ENCODE measurements at regions of chr9 and their contacts with region 1.

Region 1: DNA sequence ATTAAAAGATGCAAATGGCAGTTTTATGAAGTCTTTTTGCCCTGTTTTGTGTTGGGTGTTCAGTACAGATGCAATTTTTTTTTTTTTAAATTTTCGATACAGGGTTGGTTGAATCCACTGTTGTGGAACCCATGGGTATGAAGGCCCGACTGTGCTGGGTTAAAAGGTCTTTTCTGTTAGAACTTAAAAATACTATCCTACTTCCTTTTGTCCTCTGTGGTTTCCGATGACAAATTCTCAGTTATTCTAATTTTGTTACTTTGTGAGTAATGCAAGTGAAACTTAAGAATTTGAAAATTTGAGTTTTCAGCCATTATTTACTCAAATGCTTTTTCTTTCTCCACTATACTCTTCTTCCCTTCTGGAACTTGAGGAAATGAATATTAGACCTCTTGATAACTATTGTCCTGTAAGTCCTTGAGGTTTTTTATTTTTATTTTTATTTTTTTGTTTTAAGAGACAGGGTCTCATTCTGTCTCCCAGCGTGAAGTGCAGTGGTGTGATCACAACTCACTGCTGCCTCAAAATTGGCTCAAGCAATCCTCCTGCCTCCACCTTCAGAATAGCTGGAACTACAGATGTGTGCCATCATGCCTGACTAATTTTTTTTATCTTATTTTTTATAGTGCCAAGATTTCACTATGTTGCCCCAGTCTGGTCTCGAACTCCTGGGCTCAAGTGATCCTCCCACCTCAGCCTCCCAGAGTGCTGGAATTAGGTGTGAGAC is 67.5 kb downstream of the ZCCHC7 start:
- DNase-seq: no peak
- H3K4me3 Mint-ChIP-seq: peak overlapping the region; percentile 79
- H3K27ac Mint-ChIP-seq: peak overlapping the region; percentile 90
- H3K4me1 Mint-ChIP-seq: peaks cover 24% of the 10 kb centered on the region
- H3K27me3 Mint-ChIP-seq: no peaks in the 10 kb centered on the region

Region 2: DNA sequence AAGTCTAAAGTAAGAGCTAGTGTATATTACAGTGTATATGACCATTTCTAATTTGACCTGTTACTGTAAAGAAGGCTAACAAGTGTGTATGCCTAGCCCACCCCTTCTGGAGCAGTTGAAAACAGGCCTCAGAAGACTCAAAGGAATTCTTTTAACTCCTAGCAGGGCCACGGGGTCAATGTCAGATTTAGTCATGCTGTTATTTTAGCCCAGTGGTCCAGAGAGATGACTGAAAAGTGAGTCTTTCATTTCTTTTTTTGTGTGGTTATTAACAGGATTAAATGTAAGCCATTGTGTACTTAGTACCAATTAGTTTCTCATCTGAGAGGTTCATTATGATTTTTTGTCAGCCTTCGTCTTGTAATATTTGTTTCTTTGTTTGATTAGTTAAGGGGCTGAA is 43.1 kb before region 1 on chr9:
- intact Hi-C with region 1: loop called (anchors 5 kb)
- DNase-seq: no peak
- H3K4me3 Mint-ChIP-seq: no peak overlapping the region
- H3K27ac Mint-ChIP-seq: no peak overlapping the region
- H3K4me1 Mint-ChIP-seq: peaks cover 19% of the 10 kb centered on the region
- H3K27me3 Mint-ChIP-seq: no peaks in the 10 kb centered on the region

Measured in activated T-helper 1 cell treated with anti-CD3 and anti-CD28 coated beads, Interleukin-12 subunit alpha, Interleukin-12 subunit beta, Interleukin-2, Interleukin-4 antibody, amounts not matched to agents 30 ng/mL and 10 ng/mL and 1 ng/mL, durations not matched to agents 14 hours and 24 hours and 36 hours (primary cell).